ENCODE measurements at regions of chr14 and their contacts with region 1.

Region 1: GRCh38 chr14:53055003-53055402 is 98.1 kb downstream of the DDHD1 start:
- DNase-seq: peak; percentile 51
- H3K4me3 ChIP-seq: no peak overlapping the region
- H3K27ac ChIP-seq: no peak overlapping the region
- H3K4me1 ChIP-seq: no peaks in the 10 kb centered on the region
- CTCF ChIP-seq: peak; percentile 91

Region 2: GRCh38 chr14:53306267-53306721 is 251.3 kb after region 1 on chr14:
- CTCF ChIA-PET with region 1: no interaction called
- POLR2A ChIA-PET with region 1: interaction called, 3 read pairs
- intact Hi-C with region 1: loop called (anchors 2 kb)
- DNase-seq: peak; percentile 40
- H3K4me3 ChIP-seq: no peak overlapping the region
- H3K27ac ChIP-seq: no peak overlapping the region
- H3K4me1 ChIP-seq: no peaks in the 10 kb centered on the region
- CTCF ChIP-seq: peak; percentile 88

Region 3: GRCh38 chr14:53491256-53491883 is 436.4 kb after region 1 on chr14:
- CTCF ChIA-PET with region 1: no interaction called
- POLR2A ChIA-PET with region 1: no interaction called
- intact Hi-C with region 1: no loop called
- DNase-seq: no peak
- H3K4me3 ChIP-seq: no peak overlapping the region
- H3K27ac ChIP-seq: no peak overlapping the region
- H3K4me1 ChIP-seq: no peaks in the 10 kb centered on the region
- CTCF ChIP-seq: no peak

Measured in OCI-LY7 (cell line).